Caco-2 (cell line): ENCODE measurements at regions of chr11 and their contacts with region 1.

Region 1: GRCh38 chr11:64040684-64041322 is 5.1 kb downstream of the FLRT1 start:
- DNase-seq: peak; percentile 67 to 75
- H3K4me3 ChIP-seq: no peak overlapping the region
- H3K4me3 Mint-ChIP-seq: no peak overlapping the region
- H3K27ac Mint-ChIP-seq: no peak overlapping the region
- H3K4me1 ChIP-seq: peaks cover 13% of the 10 kb centered on the region
- H3K4me1 Mint-ChIP-seq: peaks cover 7% of the 10 kb centered on the region
- H3K27me3 ChIP-seq: no peaks in the 10 kb centered on the region; the same call in 1 of the 2 replicates
- H3K27me3 Mint-ChIP-seq: no peaks in the 10 kb centered on the region
- CTCF ChIP-seq: peak; percentile 61 to 89

Region 2: DNA sequence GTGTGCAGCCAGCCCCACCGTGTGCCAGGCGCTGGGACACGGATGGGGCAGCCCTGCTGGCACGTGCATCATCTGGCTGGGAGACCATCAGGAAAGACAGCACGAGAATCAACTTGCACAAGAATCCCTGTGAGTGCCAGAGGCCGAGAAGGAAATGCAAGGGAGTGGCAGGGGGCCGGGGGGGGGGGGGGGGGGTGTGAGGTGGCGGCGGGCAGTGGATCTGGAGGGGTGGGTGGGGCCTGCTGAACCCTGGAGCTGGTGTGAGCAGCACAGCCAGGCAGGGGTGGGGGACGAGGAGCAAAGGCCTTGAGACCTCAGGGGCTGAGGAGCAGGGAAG is 19.1 kb before region 1 on chr11:
- CTCF ChIA-PET with region 1: no interaction called
- POLR2A ChIA-PET with region 1: no interaction called
- intact Hi-C with region 1: no loop called
- DNase-seq: no peak
- H3K4me3 ChIP-seq: no peak overlapping the region
- H3K4me3 Mint-ChIP-seq: no peak overlapping the region
- H3K27ac Mint-ChIP-seq: no peak overlapping the region
- H3K4me1 ChIP-seq: no peaks in the 10 kb centered on the region
- H3K4me1 Mint-ChIP-seq: no peaks in the 10 kb centered on the region
- H3K27me3 ChIP-seq: no peaks in the 10 kb centered on the region
- H3K27me3 Mint-ChIP-seq: no peaks in the 10 kb centered on the region
- CTCF ChIP-seq: no peak

Region 3: GRCh38 chr11:64152841-64153691 is 112.3 kb after region 1 on chr11:
- CTCF ChIA-PET with region 1: no interaction called
- POLR2A ChIA-PET with region 1: no interaction called
- intact Hi-C with region 1: loop called (anchors 1 kb)
- DNase-seq: peak in 1 of 2 experiments; percentile 82
- H3K4me3 ChIP-seq: no peak overlapping the region
- H3K4me3 Mint-ChIP-seq: no peak overlapping the region
- H3K27ac Mint-ChIP-seq: no peak overlapping the region
- H3K4me1 ChIP-seq: no peaks in the 10 kb centered on the region
- H3K4me1 Mint-ChIP-seq: peaks cover 11% of the 10 kb centered on the region
- H3K27me3 ChIP-seq: no peaks in the 10 kb centered on the region
- H3K27me3 Mint-ChIP-seq: no peaks in the 10 kb centered on the region
- CTCF ChIP-seq: peak; percentile 98 to 99